Activated CD4-positive, alpha-beta T cell treated with anti-CD3 and anti-CD28 coated beads for 36 hours (primary cell): ENCODE measurements at regions of chr17 and their contacts with region 1.

Region 1: DNA sequence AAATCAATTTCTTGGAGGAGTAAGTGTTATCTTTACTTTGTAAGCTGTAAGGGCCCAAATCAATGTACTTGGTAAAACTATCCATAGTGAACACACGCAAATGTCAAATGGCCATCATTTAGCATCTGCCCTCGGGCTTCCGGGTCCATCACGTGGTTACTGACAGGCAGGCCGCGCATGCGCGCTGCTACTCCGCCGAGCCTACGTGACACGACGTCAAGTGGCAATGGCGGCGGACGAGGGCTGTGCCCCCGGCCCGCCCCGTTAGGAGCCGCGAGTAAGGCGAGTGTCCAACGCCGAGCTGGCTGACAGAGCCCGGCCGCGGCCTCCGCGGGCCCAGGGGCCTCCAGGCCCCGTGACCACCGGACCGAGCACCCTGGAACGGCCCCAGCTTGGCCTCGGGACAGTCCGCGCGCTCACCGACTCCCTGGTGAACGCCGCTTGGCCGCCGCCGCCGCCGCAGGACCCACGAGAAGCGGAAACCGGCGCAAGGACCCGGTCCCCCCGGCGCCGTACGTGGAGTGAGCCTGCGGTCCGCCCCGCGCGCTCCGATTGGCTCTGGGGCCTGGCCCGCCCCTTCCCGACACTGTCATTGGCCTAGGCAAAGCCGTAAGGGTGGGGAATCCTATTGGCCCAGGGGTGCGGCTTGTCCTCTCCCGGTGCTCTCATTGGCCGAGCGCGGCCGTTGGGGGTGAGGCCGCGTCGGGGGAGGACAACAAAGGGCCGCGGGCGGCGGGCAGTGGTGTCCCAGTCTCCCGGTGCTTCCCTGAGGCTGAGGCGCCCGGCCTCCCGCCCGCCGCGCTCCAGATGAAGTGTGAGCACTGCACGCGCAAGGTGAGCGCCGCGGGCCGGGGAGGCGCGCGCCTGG is at the start of gene NARF:
- DNase-seq: peak; percentile 98
- ATAC-seq: peak; percentile 99
- H3K4me3 Mint-ChIP-seq: peak within 1 kb of the TSS; percentile 79
- H3K27ac Mint-ChIP-seq: peak within 1 kb of the TSS; percentile 99
- H3K4me1 Mint-ChIP-seq: peaks cover 28% of the 10 kb centered on the region
- H3K27me3 Mint-ChIP-seq: no peaks in the 10 kb centered on the region
- total RNA-seq, gene NARF: 65.4 to 85.9 TPM

Region 2: GRCh38 chr17:81890447-81891299 is 567.6 kb before region 1 on chr17:
- CTCF ChIA-PET with region 1: no interaction called
- POLR2A ChIA-PET with region 1: no interaction called
- intact Hi-C with region 1: loop called in 1 of 2 experiments (anchors 1 kb)
- DNase-seq: peak; percentile 51
- ATAC-seq: no peak
- H3K4me3 Mint-ChIP-seq: peak overlapping the region; percentile 85
- H3K27ac Mint-ChIP-seq: peak overlapping the region; percentile 93
- H3K4me1 Mint-ChIP-seq: peaks cover 32% of the 10 kb centered on the region
- H3K27me3 Mint-ChIP-seq: no peaks in the 10 kb centered on the region

Region 3: GRCh38 chr17:82297714-82298537 is 160.3 kb before region 1 on chr17:
- CTCF ChIA-PET with region 1: no interaction called
- POLR2A ChIA-PET with region 1: no interaction called
- intact Hi-C with region 1: loop called in 1 of 2 experiments (anchors 2 kb)
- DNase-seq: peak; percentile 96
- ATAC-seq: peak; percentile 62
- H3K4me3 Mint-ChIP-seq: peak overlapping the region; percentile 80
- H3K27ac Mint-ChIP-seq: peak overlapping the region; percentile 100
- H3K4me1 Mint-ChIP-seq: peaks cover 70% of the 10 kb centered on the region
- H3K27me3 Mint-ChIP-seq: no peaks in the 10 kb centered on the region

Region 4: GRCh38 chr17:82518826-82519810 is 60.9 kb after region 1 on chr17 and contains the start of gene FOXK2:
- CTCF ChIA-PET with region 1: no interaction called
- POLR2A ChIA-PET with region 1: interaction called, 6 read pairs
- intact Hi-C with region 1: loop called (anchors 1 to 2 kb)
- DNase-seq: peak; percentile 95
- ATAC-seq: peak; percentile 98
- H3K4me3 Mint-ChIP-seq: peak within 1 kb of the TSS; percentile 88
- H3K27ac Mint-ChIP-seq: peak within 1 kb of the TSS; percentile 92
- H3K4me1 Mint-ChIP-seq: peaks cover 24% of the 10 kb centered on the region
- H3K27me3 Mint-ChIP-seq: no peaks in the 10 kb centered on the region
- total RNA-seq, gene FOXK2: 58.1 to 75.4 TPM

Region 5: GRCh38 chr17:82648166-82648668 is 190.0 kb after region 1 on chr17 and contains the start of gene WDR45B:
- CTCF ChIA-PET with region 1: no interaction called
- POLR2A ChIA-PET with region 1: no interaction called
- intact Hi-C with region 1: loop called in 1 of 2 experiments (anchors 1 kb)
- DNase-seq: peak; percentile 95
- ATAC-seq: peak; percentile 88
- H3K4me3 Mint-ChIP-seq: peak within 1 kb of the TSS; percentile 82
- H3K27ac Mint-ChIP-seq: peak within 1 kb of the TSS; percentile 65
- H3K4me1 Mint-ChIP-seq: peaks cover 24% of the 10 kb centered on the region
- H3K27me3 Mint-ChIP-seq: no peaks in the 10 kb centered on the region
- total RNA-seq, gene WDR45B: 74.1 to 74.8 TPM